Transverse colon (tissue), 4 donors: ENCODE measurements at regions of chr17 and their contacts with region 1.

Region 1: DNA sequence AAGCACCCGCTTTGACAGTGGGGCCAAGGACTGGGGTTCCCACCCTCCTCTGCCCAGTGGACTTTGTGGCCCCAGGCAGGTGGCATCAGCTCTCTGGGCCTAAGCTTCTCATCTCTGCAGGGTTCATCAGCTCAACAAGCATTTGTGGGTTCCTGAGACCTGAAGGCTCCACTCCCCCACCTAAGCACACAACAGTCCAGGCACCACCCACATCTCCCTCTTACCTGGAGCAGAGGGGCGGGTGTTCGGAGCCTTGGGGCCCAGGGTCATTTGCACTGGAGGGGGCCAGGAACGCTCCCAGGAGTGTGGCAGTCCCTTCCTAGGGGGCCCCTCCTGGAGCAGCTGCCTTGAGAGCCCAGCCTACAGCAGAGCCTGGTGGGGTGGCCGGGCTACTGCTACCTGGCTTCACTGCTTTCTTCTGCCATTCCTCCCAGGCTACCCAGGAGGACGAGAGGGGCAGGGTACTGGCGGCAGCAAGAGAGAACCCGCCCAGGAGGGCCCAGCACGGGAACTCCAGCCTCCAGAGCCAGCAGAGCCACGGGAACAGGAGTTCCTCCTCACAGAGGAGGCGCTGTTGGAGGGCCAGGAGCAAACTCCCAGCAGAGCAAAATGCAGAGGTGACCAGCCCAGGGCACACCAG is 34.9 kb upstream of the SLC38A10 start:
- DNase-seq: peak; percentile 61
- H3K4me3 ChIP-seq: peak overlapping the region in 1 of 4 donors; percentile 1
- H3K27ac ChIP-seq: peak overlapping the region; percentile 84 to 91 (median 86)
- H3K4me1 ChIP-seq: peaks cover 24 to 48% (median 32%) of the 10 kb centered on the region in 4 donors
- H3K27me3 ChIP-seq: no peaks in the 10 kb centered on the region
- CTCF ChIP-seq: peak in 3 of 5 experiments; percentile 8 to 27 (median 12)
- EP300 ChIP-seq: no peak
- POLR2A ChIP-seq: no peak

Region 2: DNA sequence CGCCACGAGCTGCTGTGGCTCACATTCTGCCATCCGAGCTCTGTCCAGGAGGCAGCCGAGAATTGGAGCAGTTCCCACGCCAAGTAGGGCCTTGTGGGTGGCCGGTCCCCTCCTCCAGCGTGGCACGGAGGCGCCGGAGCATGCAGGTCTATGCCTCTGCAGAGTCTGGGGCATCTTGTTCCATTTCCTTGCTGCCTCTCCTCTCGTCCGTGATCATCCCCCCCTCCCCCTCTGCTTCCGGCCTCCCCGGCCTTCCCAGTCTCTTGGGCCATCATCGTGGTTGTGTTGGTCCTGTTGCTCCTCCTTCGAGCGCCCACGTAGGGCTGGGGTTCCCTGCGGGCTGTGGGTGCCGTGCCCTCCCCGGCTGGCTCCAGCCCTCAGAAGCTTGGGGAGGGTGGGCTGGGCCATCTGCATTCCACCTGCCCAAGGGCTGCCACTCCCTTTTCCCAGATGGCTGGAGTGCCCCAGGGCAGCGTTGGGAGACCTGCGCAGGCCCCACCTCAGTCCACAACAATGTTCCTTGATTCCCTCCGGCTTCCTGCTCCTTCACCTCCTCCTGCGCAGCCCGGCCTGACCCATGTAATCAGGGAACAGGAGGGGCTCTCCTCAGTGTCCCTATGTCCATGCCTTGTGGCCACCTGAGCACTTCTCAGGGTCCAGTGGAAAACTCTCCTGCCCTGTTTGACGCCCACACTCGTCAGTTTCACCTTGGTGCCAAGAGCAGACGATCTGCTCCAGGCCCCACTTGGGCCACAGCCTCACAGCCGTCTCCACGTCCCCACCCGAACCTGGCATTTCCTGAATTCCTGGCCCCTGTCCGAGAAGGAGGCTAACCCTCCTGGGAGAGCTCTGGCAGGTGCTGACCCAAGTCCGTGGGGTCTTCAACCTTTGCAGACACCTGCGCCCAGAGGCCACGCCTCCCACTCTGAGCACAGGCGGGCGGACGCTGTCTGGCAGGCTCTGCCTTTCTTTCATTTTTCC is 258.0 kb before region 1 on chr17:
- in situ Hi-C with region 1: no loop called
- intact Hi-C with region 1: no loop called
- DNase-seq: no peak
- H3K4me3 ChIP-seq: no peak overlapping the region
- H3K27ac ChIP-seq: peak overlapping the region in 1 of 4 donors; percentile 24
- H3K4me1 ChIP-seq: peaks cover 0 to 11% (median 5%) of the 10 kb centered on the region in 4 donors
- H3K27me3 ChIP-seq: no peaks in the 10 kb centered on the region
- CTCF ChIP-seq: no peak
- EP300 ChIP-seq: no peak
- POLR2A ChIP-seq: no peak

Region 3: GRCh38 chr17:81277421-81277820 is 52.6 kb before region 1 on chr17:
- in situ Hi-C with region 1: no loop called
- intact Hi-C with region 1: no loop called
- DNase-seq: peak; percentile 32
- H3K4me3 ChIP-seq: peak overlapping the region in 1 of 4 donors; percentile 25
- H3K27ac ChIP-seq: peak overlapping the region; percentile 50 to 77 (median 66)
- H3K4me1 ChIP-seq: peaks cover 5 to 17% (median 13%) of the 10 kb centered on the region in 4 donors
- H3K27me3 ChIP-seq: no peaks in the 10 kb centered on the region
- CTCF ChIP-seq: no peak
- EP300 ChIP-seq: no peak
- POLR2A ChIP-seq: no peak

Region 4: DNA sequence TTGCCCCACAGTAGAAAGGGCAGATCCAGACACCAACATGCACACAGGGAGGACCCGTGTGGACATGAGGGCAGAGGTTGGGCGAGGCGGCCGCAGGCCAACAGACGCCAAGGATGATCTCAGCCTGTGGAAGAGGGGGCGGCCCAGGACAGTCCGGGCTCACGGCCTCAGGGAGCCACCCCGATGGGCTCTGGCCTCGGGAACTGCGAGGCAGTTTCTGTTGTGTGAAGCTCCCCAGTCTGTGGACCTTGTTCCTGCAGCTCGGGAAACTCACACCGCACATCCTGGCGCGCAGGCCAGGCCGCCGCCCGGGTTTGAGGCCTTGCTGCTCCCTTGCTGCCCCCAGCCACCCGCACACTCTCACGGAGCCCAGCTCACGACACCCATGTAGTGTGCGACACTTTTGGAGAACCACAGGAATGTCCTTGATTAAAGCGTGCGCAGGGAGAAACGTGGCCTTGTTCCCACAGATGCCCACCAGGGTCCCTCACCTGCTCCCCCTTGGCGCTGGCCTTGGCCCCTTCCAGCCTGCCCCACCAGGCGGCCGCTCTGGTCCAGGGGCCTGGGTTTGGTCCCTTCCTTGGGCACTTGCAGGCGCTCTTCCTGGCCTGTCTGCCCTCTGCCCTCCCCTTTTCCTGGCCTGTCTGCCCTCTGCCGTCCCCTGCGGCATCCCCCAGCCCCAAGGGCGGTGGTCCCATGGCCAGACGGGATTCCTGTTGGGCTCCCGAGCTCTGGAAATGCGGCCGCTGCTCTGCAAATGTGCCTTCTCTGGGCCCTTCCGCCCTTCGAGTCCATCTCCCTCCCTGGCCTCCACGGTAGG is 25.6 kb before region 1 on chr17:
- in situ Hi-C with region 1: no loop called
- intact Hi-C with region 1: loop called (anchors 2 kb)
- DNase-seq: no peak
- H3K4me3 ChIP-seq: no peak overlapping the region
- H3K27ac ChIP-seq: no peak overlapping the region
- H3K4me1 ChIP-seq: peaks cover 1 to 11% (median 6%) of the 10 kb centered on the region in 4 donors
- H3K27me3 ChIP-seq: no peaks in the 10 kb centered on the region
- CTCF ChIP-seq: no peak
- EP300 ChIP-seq: no peak
- POLR2A ChIP-seq: no peak

Region 5: GRCh38 chr17:81394921-81395599 is 65.0 kb after region 1 on chr17 and contains the start of gene BAHCC1:
- in situ Hi-C with region 1: loop called in 1 of 4 experiments (anchors 10 kb)
- intact Hi-C with region 1: no loop called
- DNase-seq: peak; percentile 100
- H3K4me3 ChIP-seq: peak within 1 kb of the TSS; percentile 54 to 88 (median 82)
- H3K27ac ChIP-seq: peak within 1 kb of the TSS; percentile 97 to 99 (median 98)
- H3K4me1 ChIP-seq: peaks cover 19 to 42% (median 33%) of the 10 kb centered on the region in 4 donors
- H3K27me3 ChIP-seq: peaks cover 13% of the 10 kb centered on the region
- CTCF ChIP-seq: no peak
- EP300 ChIP-seq: no peak
- POLR2A ChIP-seq: peak; percentile 98
- total RNA-seq, gene BAHCC1: 8.7 to 133 (median 12.4) TPM

Region 6: GRCh38 chr17:81405411-81405872 is 75.4 kb after region 1 on chr17:
- in situ Hi-C with region 1: no loop called
- intact Hi-C with region 1: no loop called
- DNase-seq: no peak
- H3K4me3 ChIP-seq: no peak overlapping the region
- H3K27ac ChIP-seq: peak overlapping the region; percentile 95 to 99 (median 98)
- H3K4me1 ChIP-seq: peaks cover 27 to 65% (median 52%) of the 10 kb centered on the region in 4 donors
- H3K27me3 ChIP-seq: no peaks in the 10 kb centered on the region
- CTCF ChIP-seq: no peak
- EP300 ChIP-seq: no peak
- POLR2A ChIP-seq: no peak

Region 7: GRCh38 chr17:81609541-81610311 is 279.7 kb after region 1 on chr17:
- in situ Hi-C with region 1: no loop called
- intact Hi-C with region 1: no loop called
- DNase-seq: no peak
- H3K4me3 ChIP-seq: no peak overlapping the region
- H3K27ac ChIP-seq: no peak overlapping the region
- H3K4me1 ChIP-seq: peaks cover 0 to 5% (median 2%) of the 10 kb centered on the region in 4 donors
- H3K27me3 ChIP-seq: no peaks in the 10 kb centered on the region
- CTCF ChIP-seq: no peak
- EP300 ChIP-seq: no peak
- POLR2A ChIP-seq: no peak